Natural killer cell (primary cell): ENCODE measurements at regions of chrX and their contacts with region 1.

Region 1: GRCh38 chrX:40153335-40154249 is 55.8 kb upstream of the BCOR start:
- DNase-seq: peak in 1 of 2 donors; percentile 84
- ATAC-seq: peak; percentile 52 to 62 (median 57)
- H3K4me3 ChIP-seq: peak overlapping the region; percentile 37
- H3K4me3 Mint-ChIP-seq: peak overlapping the region; percentile 85
- H3K27ac ChIP-seq: no peak overlapping the region
- H3K27ac Mint-ChIP-seq: peak overlapping the region in 1 of 2 donors; percentile 63
- H3K4me1 ChIP-seq: peaks cover 62% of the 10 kb centered on the region
- H3K4me1 Mint-ChIP-seq: peaks cover 8 to 17% of the 10 kb centered on the region in 2 donors
- H3K27me3 ChIP-seq: no peaks in the 10 kb centered on the region
- H3K27me3 Mint-ChIP-seq: peaks cover 6 to 19% of the 10 kb centered on the region in 2 donors
- CTCF ChIP-seq: no peak

Region 2: DNA sequence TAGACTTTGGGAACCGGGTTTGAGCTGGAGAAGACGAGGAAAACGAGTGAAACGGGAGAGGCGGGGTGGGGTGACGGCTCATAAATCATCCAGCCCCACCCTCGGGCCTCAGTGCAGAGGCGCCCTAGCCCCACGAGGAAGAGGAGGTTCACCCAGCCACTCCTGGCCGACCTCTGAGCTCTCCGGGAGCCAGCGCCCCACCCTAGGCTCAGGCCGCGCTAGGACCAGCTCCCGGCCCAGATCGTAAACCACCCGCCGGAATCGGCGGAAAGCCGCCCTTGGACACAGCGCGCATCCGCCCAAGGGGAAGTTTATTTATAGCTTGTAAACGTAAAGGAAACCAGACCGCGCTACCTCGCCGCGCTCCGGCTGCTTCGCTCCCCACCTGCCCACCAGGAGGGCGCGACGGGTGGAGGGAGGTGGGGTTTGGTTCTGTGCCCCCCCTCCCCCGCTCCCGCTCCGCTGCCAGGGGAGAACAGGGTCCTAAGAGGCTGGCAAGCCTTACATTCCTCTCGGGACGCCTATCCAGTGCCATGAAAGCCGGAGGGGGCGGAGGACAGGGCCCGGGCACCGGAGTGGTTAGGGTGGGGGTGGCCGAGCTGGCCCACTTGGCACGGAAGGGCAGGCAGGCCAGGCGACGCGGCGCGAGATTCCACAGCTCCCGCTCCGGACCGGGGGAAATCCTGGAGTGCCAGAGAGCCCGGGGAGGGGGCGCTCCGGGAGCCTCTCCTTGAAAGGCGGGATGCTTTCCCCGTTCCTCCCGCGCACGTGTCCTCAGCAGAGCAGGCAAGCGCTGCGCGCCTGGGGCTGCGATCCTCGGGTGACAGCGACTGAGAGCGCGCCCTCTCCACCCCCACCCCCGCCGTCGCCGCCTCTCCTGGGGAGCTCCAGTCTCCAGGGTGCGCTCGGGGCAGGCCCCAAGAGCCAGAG is 140.1 kb before region 1 on chrX:
- intact Hi-C with region 1: loop called (anchors 5 kb)
- DNase-seq: peak; percentile 23 to 58
- ATAC-seq: peak; percentile 25 to 45 (median 28)
- H3K4me3 ChIP-seq: peak overlapping the region; percentile 61
- H3K4me3 Mint-ChIP-seq: peak overlapping the region; percentile 84
- H3K27ac ChIP-seq: peak overlapping the region; percentile 76
- H3K27ac Mint-ChIP-seq: peak overlapping the region in 1 of 2 donors; percentile 81
- H3K4me1 ChIP-seq: peaks cover 49% of the 10 kb centered on the region
- H3K4me1 Mint-ChIP-seq: peaks cover 0 to 20% of the 10 kb centered on the region in 2 donors
- H3K27me3 ChIP-seq: peaks cover 3% of the 10 kb centered on the region
- H3K27me3 Mint-ChIP-seq: peaks cover 10 to 22% of the 10 kb centered on the region in 2 donors
- CTCF ChIP-seq: no peak

Region 3: GRCh38 chrX:40468033-40468846 is 314.6 kb after region 1 on chrX:
- intact Hi-C with region 1: no loop called
- DNase-seq: peak in 1 of 2 donors; percentile 58
- ATAC-seq: peak in 1 of 3 donors; percentile 63
- H3K4me3 ChIP-seq: no peak overlapping the region
- H3K4me3 Mint-ChIP-seq: no peak overlapping the region
- H3K27ac ChIP-seq: no peak overlapping the region
- H3K27ac Mint-ChIP-seq: no peak overlapping the region
- H3K4me1 ChIP-seq: peaks cover 12% of the 10 kb centered on the region
- H3K4me1 Mint-ChIP-seq: peaks cover 0 to 15% of the 10 kb centered on the region in 2 donors
- H3K27me3 ChIP-seq: no peaks in the 10 kb centered on the region
- H3K27me3 Mint-ChIP-seq: peaks cover 14 to 30% of the 10 kb centered on the region in 2 donors
- CTCF ChIP-seq: no peak